Lower leg skin (tissue), 4 donors: ENCODE measurements at regions of chr14 and their contacts with region 1.

Region 1: GRCh38 chr14:87306414-87307168 is 686.4 kb downstream of the GALC start:
- DNase-seq: no peak
- H3K4me3 ChIP-seq: no peak overlapping the region
- CTCF ChIP-seq: no peak
- POLR2A ChIP-seq: no peak

Region 2: DNA sequence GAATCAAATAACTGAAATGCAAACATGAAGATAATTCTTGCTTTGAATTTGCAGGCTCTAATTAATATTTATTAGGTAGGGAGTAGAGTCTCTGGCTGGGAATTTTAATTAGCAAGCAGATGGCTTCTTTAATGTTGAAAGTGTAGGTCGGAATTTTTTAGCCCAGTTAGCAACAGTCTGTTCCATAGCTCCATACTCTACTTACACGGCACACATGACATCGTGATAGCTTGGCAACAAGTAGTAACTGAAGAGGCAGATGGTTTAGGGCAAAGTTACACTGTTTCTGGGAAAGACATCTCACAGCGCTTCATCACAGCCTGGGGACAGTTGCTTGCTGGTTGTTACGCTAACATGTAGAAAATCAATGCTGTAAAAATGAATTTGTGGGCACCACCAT is 24.3 kb before region 1 on chr14:
- intact Hi-C with region 1: loop called (anchors 1 kb)
- DNase-seq: no peak
- H3K4me3 ChIP-seq: no peak overlapping the region
- CTCF ChIP-seq: no peak
- POLR2A ChIP-seq: no peak